Prostate gland (tissue), 2 donors: ENCODE measurements at regions of chr4 and their contacts with region 1.

Region 1: GRCh38 chr4:37891260-37892159 is 626 bp downstream of the TBC1D1 start:
- DNase-seq: peak; percentile 56
- H3K4me3 ChIP-seq: peak overlapping the region; percentile 86 to 93
- H3K27ac ChIP-seq: peak overlapping the region; percentile 81 to 90
- H3K4me1 ChIP-seq: no peaks in the 10 kb centered on the region
- H3K27me3 ChIP-seq: no peaks in the 10 kb centered on the region
- CTCF ChIP-seq: no peak
- POLR2A ChIP-seq: no peak

Region 2: DNA sequence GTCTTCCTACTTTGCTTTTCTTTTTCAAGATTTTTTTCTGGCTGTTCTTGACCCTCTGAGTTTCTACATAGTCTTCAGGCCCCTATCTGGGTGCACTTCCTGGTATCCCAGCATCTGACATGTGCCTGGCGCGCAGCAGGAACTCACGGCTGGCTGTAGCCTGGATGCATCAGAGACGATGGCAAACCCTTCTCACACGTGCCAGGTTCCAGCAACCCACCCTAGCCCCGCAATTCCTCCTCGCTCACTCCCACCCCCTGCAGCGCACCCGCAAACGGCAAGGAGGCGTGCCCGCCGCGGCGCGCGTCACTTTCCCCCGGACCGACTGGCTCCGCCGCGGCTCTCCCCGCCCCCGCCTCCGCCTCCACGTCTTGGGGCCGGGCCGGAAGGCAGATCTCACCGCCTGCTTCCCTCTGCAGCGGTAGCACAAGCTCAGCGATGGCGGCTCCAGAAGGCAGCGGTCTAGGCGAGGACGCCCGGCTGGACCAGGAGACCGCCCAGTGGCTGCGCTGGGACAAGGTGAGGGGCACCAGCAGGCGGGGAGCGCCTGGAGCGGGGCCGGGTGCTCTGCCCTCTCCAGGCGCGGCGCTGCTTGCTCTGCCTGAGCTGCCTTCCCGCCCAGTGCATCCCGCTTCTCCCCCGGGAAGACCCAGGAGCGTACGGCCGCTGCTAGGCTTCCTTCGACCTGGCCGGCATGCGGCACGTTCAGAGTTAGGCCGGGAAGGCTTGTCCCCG is 65.0 kb before region 1 on chr4 and contains the start of gene PGM2:
- intact Hi-C with region 1: loop called (anchors 2 kb)
- DNase-seq: peak; percentile 86
- H3K4me3 ChIP-seq: peak within 1 kb of the TSS; percentile 68 to 87
- H3K27ac ChIP-seq: peak within 1 kb of the TSS; percentile 79 to 83
- H3K4me1 ChIP-seq: no peaks in the 10 kb centered on the region
- H3K27me3 ChIP-seq: no peaks in the 10 kb centered on the region
- CTCF ChIP-seq: peak in 2 of 4 experiments; percentile 23 to 27
- POLR2A ChIP-seq: peak; percentile 94
- total RNA-seq, gene PGM2: 23.2 to 25.3 TPM

Region 3: DNA sequence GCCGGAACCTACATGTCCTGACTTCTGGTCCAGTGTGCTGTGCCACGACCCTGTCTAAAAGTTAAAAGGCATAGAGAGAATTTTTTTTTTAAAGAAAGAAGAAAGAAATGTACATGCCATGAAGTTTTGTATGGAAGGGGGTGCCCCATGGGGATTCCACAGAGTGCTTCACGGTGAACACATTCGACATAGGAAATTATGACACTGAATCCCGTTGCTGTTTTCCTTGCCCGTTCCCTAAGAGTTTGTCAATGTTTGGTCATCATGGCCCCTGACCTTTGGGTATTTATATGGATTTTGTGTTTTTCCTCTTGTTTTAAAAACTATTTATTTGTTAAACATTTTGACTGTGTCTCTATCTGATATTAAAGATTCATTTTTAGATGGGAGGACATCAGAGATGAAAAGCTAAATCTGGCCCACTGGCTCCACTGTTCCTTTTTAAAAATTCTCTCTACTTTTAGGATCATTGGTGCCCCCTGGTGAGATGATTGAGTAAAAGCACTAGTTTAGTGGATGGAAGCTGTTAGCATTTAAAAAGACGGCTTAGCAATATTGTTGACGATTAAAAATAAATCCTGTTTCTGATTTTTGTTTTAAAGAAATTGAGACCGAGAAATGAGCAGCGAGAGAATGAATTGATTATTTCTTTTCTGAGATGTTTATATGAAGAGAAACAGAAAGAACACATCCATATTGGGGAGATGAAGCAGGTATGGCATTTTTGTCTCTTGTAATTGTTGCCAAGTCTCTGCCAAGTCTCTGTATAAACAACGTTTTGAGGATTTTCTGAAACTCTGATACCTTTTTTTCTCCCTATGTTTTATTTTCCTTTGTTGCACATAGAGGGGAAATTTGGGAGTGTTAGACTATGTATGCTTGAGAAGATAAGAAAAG is 143.7 kb after region 1 on chr4:
- intact Hi-C with region 1: loop called (anchors 10 kb)
- DNase-seq: peak; percentile 63
- H3K4me3 ChIP-seq: no peak overlapping the region
- H3K27ac ChIP-seq: no peak overlapping the region
- H3K4me1 ChIP-seq: no peaks in the 10 kb centered on the region
- H3K27me3 ChIP-seq: no peaks in the 10 kb centered on the region
- CTCF ChIP-seq: peak; percentile 32 to 84 (median 72)
- POLR2A ChIP-seq: no peak

Region 4: GRCh38 chr4:38069271-38069760 is 177.8 kb after region 1 on chr4:
- intact Hi-C with region 1: no loop called
- DNase-seq: peak; percentile 60
- H3K4me3 ChIP-seq: no peak overlapping the region
- H3K27ac ChIP-seq: no peak overlapping the region
- H3K4me1 ChIP-seq: no peaks in the 10 kb centered on the region
- H3K27me3 ChIP-seq: no peaks in the 10 kb centered on the region
- CTCF ChIP-seq: peak in 3 of 4 experiments; percentile 26 to 83 (median 77)
- POLR2A ChIP-seq: no peak

Region 5: DNA sequence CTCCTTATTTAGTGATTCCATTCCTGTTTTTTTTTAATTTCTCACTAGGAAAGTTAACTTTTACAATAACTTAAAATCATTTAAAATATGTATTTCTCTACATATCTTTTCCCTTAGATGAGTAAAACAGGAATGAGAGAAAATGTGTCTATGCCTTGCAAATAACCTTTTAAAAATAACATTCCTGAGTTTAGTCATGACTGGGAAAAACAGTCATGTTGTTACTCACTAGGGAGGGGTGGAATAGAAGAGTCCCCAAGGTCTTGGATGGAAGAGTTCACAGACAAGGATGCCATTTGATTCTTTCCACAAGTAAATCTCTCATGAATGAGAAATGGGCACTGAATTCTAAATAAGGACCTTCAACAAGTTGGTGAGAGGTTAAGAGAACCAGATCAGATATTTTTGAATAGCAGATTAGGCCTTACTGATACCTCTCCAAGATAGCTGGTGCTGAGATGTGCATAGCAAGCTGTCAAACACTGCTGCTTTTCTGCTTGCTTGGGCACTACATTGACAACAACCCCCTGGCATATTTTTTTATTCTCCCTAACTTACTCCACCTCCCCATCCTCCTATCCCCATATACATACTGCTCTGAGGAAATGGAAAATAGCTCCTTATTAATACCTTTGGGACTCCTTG is 1610.6 kb after region 1 on chr4:
- intact Hi-C with region 1: no loop called
- DNase-seq: no peak
- H3K4me3 ChIP-seq: no peak overlapping the region
- H3K27ac ChIP-seq: no peak overlapping the region
- H3K4me1 ChIP-seq: no peaks in the 10 kb centered on the region
- H3K27me3 ChIP-seq: no peaks in the 10 kb centered on the region
- CTCF ChIP-seq: no peak
- POLR2A ChIP-seq: no peak